KBM-7 (cell line): ENCODE measurements at regions of chr11 and their contacts with region 1.

Region 1: GRCh38 chr11:8566613-8567210 is 27.3 kb downstream of the STK33 start:
- DNase-seq: peak; percentile 67

Region 2: GRCh38 chr11:8047382-8047781 is 519.3 kb before region 1 on chr11:
- in situ Hi-C with region 1: no loop called
- DNase-seq: no peak

Region 3: DNA sequence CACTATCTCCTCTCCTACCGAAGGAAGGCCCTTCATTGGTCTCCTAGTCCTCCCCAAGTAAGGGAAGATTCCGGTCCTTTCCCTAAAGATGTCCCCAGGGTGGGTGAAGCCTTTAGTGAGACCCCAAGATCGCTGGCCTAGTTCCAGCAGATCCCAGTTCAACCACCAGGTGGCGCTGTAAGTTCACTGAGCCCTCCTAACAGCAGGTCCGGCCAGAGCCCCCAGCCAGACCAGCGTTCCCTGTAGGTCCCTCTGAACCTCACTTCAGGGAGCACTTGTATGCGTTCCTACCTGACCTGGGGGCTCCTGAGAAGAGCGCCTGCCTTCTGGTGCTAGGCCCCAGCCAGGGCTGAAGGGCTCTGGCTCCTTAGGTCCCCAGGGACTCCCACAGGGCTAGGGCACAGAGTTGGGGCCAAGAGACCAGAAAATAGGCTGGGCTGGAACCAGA is 341.1 kb before region 1 on chr11:
- in situ Hi-C with region 1: loop called (anchors 25 kb)
- DNase-seq: peak; percentile 85

Region 4: GRCh38 chr11:9201372-9202162 is 634.9 kb after region 1 on chr11:
- in situ Hi-C with region 1: no loop called
- DNase-seq: no peak